ENCODE measurements at regions of chr6 and their contacts with region 1.

Region 1: GRCh38 chr6:139134817-139135581 is at the start of gene HECA:
- DNase-seq: peak; percentile 96 to 100 (median 99)
- ATAC-seq: peak; percentile 80 to 86 (median 84)
- H3K4me3 ChIP-seq: peak within 1 kb of the TSS; percentile 80 to 91
- H3K4me3 Mint-ChIP-seq: peak within 1 kb of the TSS; percentile 83 to 98 (median 87)
- H3K27ac ChIP-seq: peak within 1 kb of the TSS; percentile 93
- H3K27ac Mint-ChIP-seq: peak within 1 kb of the TSS; percentile 97 to 99
- H3K4me1 ChIP-seq: peaks cover 23 to 24% of the 10 kb centered on the region in 2 experiments
- H3K4me1 Mint-ChIP-seq: peaks cover 53 to 76% (median 68%) of the 10 kb centered on the region in 3 donors
- H3K27me3 ChIP-seq: no peaks in the 10 kb centered on the region
- H3K27me3 Mint-ChIP-seq: no peaks in the 10 kb centered on the region
- total RNA-seq, gene HECA: 125 to 137 (median 131) TPM

Region 2: GRCh38 chr6:139109558-139109957 is 25.4 kb before region 1 on chr6:
- CTCF ChIA-PET with region 1: interaction called, 5 to 8 read pairs
- POLR2A ChIA-PET with region 1: interaction called, 5 to 16 read pairs
- DNase-seq: peak in 12 of 35 experiments; percentile 8 to 40 (median 25)
- ATAC-seq: no peak
- H3K4me3 ChIP-seq: no peak overlapping the region
- H3K4me3 Mint-ChIP-seq: no peak overlapping the region
- H3K27ac ChIP-seq: no peak overlapping the region
- H3K27ac Mint-ChIP-seq: peak overlapping the region; percentile 41 to 96
- H3K4me1 ChIP-seq: peaks cover 30 to 31% of the 10 kb centered on the region in 2 experiments
- H3K4me1 Mint-ChIP-seq: peaks cover 54 to 56% (median 56%) of the 10 kb centered on the region in 3 donors
- H3K27me3 ChIP-seq: no peaks in the 10 kb centered on the region
- H3K27me3 Mint-ChIP-seq: no peaks in the 10 kb centered on the region

Region 3: DNA sequence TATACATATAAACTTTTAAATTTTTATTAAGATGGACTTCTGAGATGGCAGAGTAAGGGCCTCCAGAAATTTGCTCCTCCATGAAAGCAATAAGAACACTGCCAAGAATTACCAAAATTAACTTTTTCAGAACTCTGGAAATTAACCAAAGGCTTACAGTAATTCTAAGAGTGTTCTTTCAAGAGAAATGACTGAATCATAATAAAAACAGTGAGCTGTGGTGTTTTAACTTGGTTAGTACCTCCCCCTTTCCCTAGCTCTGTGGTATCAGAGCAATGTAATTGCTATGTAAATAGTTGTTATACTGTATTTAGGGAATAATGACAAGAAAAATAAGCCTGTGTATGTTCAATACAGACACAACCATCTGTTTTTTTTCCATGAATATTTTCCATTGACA is 18.9 kb after region 1 on chr6:
- CTCF ChIA-PET with region 1: interaction called, 4 to 11 read pairs
- POLR2A ChIA-PET with region 1: interaction called, 21 to 40 read pairs
- DNase-seq: no peak
- ATAC-seq: peak in 1 of 4 experiments; percentile 38
- H3K4me3 ChIP-seq: no peak overlapping the region
- H3K4me3 Mint-ChIP-seq: peak overlapping the region in 1 of 3 donors; percentile 16
- H3K27ac ChIP-seq: no peak overlapping the region
- H3K27ac Mint-ChIP-seq: peak overlapping the region; percentile 62 to 73
- H3K4me1 ChIP-seq: peaks cover 60 to 67% of the 10 kb centered on the region in 2 experiments
- H3K4me1 Mint-ChIP-seq: peaks cover 86 to 91% (median 88%) of the 10 kb centered on the region in 3 donors
- H3K27me3 ChIP-seq: no peaks in the 10 kb centered on the region
- H3K27me3 Mint-ChIP-seq: no peaks in the 10 kb centered on the region

Region 4: DNA sequence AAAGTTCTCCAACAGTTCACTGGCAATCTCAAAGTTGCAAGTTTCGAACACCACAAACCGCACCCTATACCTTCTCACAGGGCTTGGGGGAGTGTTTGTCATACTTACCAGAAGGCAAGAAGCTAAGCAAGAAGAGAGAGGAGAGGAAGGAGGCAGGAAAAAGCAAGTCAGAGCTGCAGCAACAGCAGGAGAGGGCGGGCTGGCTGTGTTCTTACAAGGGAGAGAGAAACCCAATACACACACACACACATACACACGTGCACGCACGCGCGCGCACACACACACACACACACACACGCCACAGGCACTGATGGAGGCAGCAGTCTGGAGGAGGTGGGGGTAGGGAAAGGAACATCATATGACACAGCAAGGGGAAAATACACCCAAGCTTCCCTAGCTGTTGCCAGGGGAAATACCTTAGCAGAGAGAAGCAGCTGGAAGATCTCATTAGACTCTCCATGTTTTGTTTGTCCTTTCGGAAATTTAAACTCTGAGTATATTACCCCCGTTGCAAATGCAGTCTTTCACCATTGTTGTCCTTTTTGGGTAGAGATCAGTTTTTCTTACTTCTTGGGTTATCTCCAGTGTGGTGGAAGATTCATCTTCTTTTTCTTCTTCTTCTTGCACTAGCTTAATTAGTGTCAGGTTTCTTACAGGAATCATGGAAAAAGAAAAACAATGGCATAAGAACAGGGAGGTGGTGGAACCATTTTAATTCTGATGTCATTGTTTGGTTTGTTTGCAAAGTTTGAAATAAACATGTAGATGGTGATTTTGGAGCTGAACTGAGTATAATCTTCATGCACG is 157.0 kb after region 1 on chr6 and contains the start of gene TXLNB:
- CTCF ChIA-PET with region 1: interaction called in 1 of 2 experiments, 4 read pairs
- POLR2A ChIA-PET with region 1: interaction called in 1 of 2 experiments, 13 read pairs
- DNase-seq: peak; percentile 51 to 91 (median 79)
- ATAC-seq: peak; percentile 87 to 97 (median 94)
- H3K4me3 ChIP-seq: peak within 1 kb of the TSS in 1 of 2 donors; percentile 44
- H3K4me3 Mint-ChIP-seq: peak within 1 kb of the TSS; percentile 67 to 78 (median 77)
- H3K27ac ChIP-seq: peak within 1 kb of the TSS; percentile 95
- H3K27ac Mint-ChIP-seq: peak within 1 kb of the TSS; percentile 97 to 98
- H3K4me1 ChIP-seq: peaks cover 30 to 34% of the 10 kb centered on the region in 2 experiments
- H3K4me1 Mint-ChIP-seq: peaks cover 63 to 78% (median 74%) of the 10 kb centered on the region in 3 donors
- H3K27me3 ChIP-seq: no peaks in the 10 kb centered on the region
- H3K27me3 Mint-ChIP-seq: no peaks in the 10 kb centered on the region
- total RNA-seq, gene TXLNB: 0.41 to 0.92 (median 0.72) TPM

Region 5: GRCh38 chr6:139369568-139370282 is 234.7 kb after region 1 on chr6:
- CTCF ChIA-PET with region 1: interaction called, 6 to 16 read pairs
- POLR2A ChIA-PET with region 1: interaction called, 7 to 17 read pairs
- DNase-seq: peak in 2 of 35 experiments; percentile 13 to 67
- ATAC-seq: no peak
- H3K4me3 ChIP-seq: peak overlapping the region in 1 of 2 donors; percentile 13
- H3K4me3 Mint-ChIP-seq: peak overlapping the region; percentile 60 to 100 (median 99)
- H3K27ac ChIP-seq: peak overlapping the region; percentile 93
- H3K27ac Mint-ChIP-seq: peak overlapping the region; percentile 97 to 99
- H3K4me1 ChIP-seq: peaks cover 18 to 19% of the 10 kb centered on the region in 2 experiments
- H3K4me1 Mint-ChIP-seq: peaks cover 42 to 48% (median 47%) of the 10 kb centered on the region in 3 donors
- H3K27me3 ChIP-seq: no peaks in the 10 kb centered on the region
- H3K27me3 Mint-ChIP-seq: no peaks in the 10 kb centered on the region

Measured in T-cell (primary cell).